CD4-positive, alpha-beta memory T cell (primary cell): ENCODE measurements at regions of chr9 and their contacts with region 1.

Region 1: GRCh38 chr9:89428901-89429890 is 68.7 kb downstream of the SEMA4D start:
- DNase-seq: peak; percentile 66 to 86 (median 73)
- H3K4me3 ChIP-seq: no peak overlapping the region
- H3K4me3 Mint-ChIP-seq: peak overlapping the region in 5 of 8 donors; percentile 17 to 73 (median 53)
- H3K27ac ChIP-seq: peak overlapping the region; percentile 4
- H3K27ac Mint-ChIP-seq: peak overlapping the region; percentile 50 to 97 (median 86)
- H3K4me1 ChIP-seq: peaks cover 100% of the 10 kb centered on the region
- H3K4me1 Mint-ChIP-seq: peaks cover 62 to 100% (median 85%) of the 10 kb centered on the region in 4 donors
- H3K27me3 ChIP-seq: no peaks in the 10 kb centered on the region
- H3K27me3 Mint-ChIP-seq: no peaks in the 10 kb centered on the region

Region 2: GRCh38 chr9:89379508-89380115 is 49.6 kb before region 1 on chr9:
- CTCF ChIA-PET with region 1: no interaction called
- POLR2A ChIA-PET with region 1: no interaction called
- intact Hi-C with region 1: no loop called
- DNase-seq: peak in 3 of 5 donors; percentile 19 to 47 (median 28)
- H3K4me3 ChIP-seq: no peak overlapping the region
- H3K4me3 Mint-ChIP-seq: no peak overlapping the region
- H3K27ac ChIP-seq: no peak overlapping the region
- H3K27ac Mint-ChIP-seq: peak overlapping the region; percentile 56 to 89 (median 79)
- H3K4me1 ChIP-seq: peaks cover 23% of the 10 kb centered on the region
- H3K4me1 Mint-ChIP-seq: peaks cover 33 to 69% (median 45%) of the 10 kb centered on the region in 4 donors
- H3K27me3 ChIP-seq: no peaks in the 10 kb centered on the region
- H3K27me3 Mint-ChIP-seq: no peaks in the 10 kb centered on the region

Region 3: GRCh38 chr9:89410641-89411350 is 18.4 kb before region 1 on chr9:
- CTCF ChIA-PET with region 1: interaction called, 8 read pairs
- POLR2A ChIA-PET with region 1: interaction called, 18 read pairs
- intact Hi-C with region 1: no loop called
- DNase-seq: peak in 4 of 5 donors; percentile 30 to 76 (median 32)
- H3K4me3 ChIP-seq: no peak overlapping the region
- H3K4me3 Mint-ChIP-seq: peak overlapping the region in 7 of 8 donors; percentile 58 to 84 (median 80)
- H3K27ac ChIP-seq: peak overlapping the region; percentile 52
- H3K27ac Mint-ChIP-seq: peak overlapping the region; percentile 86 to 95 (median 91)
- H3K4me1 ChIP-seq: peaks cover 100% of the 10 kb centered on the region
- H3K4me1 Mint-ChIP-seq: peaks cover 71 to 98% (median 82%) of the 10 kb centered on the region in 4 donors
- H3K27me3 ChIP-seq: no peaks in the 10 kb centered on the region
- H3K27me3 Mint-ChIP-seq: no peaks in the 10 kb centered on the region

Region 4: GRCh38 chr9:89442981-89443814 is 14.0 kb after region 1 on chr9:
- CTCF ChIA-PET with region 1: interaction called, 11 read pairs
- POLR2A ChIA-PET with region 1: interaction called, 9 read pairs
- intact Hi-C with region 1: no loop called
- DNase-seq: no peak
- H3K4me3 ChIP-seq: no peak overlapping the region
- H3K4me3 Mint-ChIP-seq: peak overlapping the region in 2 of 8 donors; percentile 18 to 46
- H3K27ac ChIP-seq: peak overlapping the region; percentile 50
- H3K27ac Mint-ChIP-seq: peak overlapping the region; percentile 90 to 99 (median 99)
- H3K4me1 ChIP-seq: peaks cover 99% of the 10 kb centered on the region
- H3K4me1 Mint-ChIP-seq: peaks cover 68 to 94% (median 82%) of the 10 kb centered on the region in 4 donors
- H3K27me3 ChIP-seq: no peaks in the 10 kb centered on the region
- H3K27me3 Mint-ChIP-seq: no peaks in the 10 kb centered on the region

Region 5: GRCh38 chr9:89461265-89461664 is 32.1 kb after region 1 on chr9:
- CTCF ChIA-PET with region 1: interaction called, 12 read pairs
- POLR2A ChIA-PET with region 1: interaction called, 8 read pairs
- intact Hi-C with region 1: loop called (anchors 5 kb)
- DNase-seq: peak in 1 of 5 donors; percentile 70
- H3K4me3 ChIP-seq: no peak overlapping the region
- H3K4me3 Mint-ChIP-seq: peak overlapping the region in 7 of 8 donors; percentile 36 to 80 (median 65)
- H3K27ac ChIP-seq: peak overlapping the region; percentile 45
- H3K27ac Mint-ChIP-seq: peak overlapping the region; percentile 78 to 98 (median 92)
- H3K4me1 ChIP-seq: peaks cover 100% of the 10 kb centered on the region
- H3K4me1 Mint-ChIP-seq: peaks cover 81 to 100% (median 95%) of the 10 kb centered on the region in 4 donors
- H3K27me3 ChIP-seq: no peaks in the 10 kb centered on the region
- H3K27me3 Mint-ChIP-seq: no peaks in the 10 kb centered on the region

Region 6: DNA sequence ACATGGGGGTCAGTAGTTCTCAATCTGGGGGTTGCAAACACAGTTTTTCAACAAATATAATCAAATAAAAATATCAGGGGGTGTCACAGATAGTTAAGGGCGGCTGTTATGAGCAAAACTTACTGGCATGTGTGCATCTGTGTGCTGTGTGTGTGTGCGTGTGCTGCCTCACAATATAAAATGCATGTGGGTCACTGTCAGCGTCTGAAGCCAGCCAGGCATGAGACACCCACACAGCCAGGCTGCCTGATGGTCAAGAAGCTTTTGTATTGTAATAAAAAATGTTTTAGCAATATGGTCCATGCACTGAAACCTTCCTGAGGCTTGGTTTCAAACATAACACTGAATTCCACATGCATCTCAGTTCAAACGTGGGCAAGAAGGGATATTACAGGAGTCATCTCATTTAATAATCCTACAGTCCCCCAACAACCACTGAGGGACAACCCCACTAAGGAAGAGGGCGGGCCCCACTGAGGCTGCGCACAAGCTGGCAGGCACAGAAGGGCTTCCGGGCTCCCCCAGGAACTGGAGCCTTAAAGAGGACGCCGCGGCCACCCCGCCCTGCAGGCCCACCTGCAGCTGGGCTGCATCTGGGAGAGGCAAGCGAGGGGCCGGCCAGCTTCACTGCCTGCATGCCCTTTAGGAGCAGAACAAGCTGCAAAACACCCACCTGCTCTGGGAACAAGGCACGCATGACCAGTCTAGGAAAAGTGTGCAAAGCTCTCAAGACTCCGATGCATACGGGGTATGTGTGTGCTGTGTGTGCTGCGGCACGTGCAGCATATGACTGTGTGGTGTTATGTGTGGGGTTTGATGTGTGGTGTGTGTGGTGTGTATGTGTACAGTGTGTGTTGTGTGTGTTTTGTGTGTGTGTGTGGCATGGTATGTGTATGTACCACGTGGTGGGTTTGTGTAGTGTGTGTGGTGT is 54.7 kb after region 1 on chr9:
- CTCF ChIA-PET with region 1: interaction called, 16 read pairs
- POLR2A ChIA-PET with region 1: interaction called, 13 read pairs
- intact Hi-C with region 1: no loop called
- DNase-seq: peak; percentile 66 to 83 (median 72)
- H3K4me3 ChIP-seq: peak overlapping the region; percentile 50 to 79
- H3K4me3 Mint-ChIP-seq: peak overlapping the region; percentile 92 to 100 (median 98)
- H3K27ac ChIP-seq: peak overlapping the region; percentile 58
- H3K27ac Mint-ChIP-seq: peak overlapping the region; percentile 74 to 99 (median 96)
- H3K4me1 ChIP-seq: peaks cover 89% of the 10 kb centered on the region
- H3K4me1 Mint-ChIP-seq: peaks cover 78 to 95% (median 88%) of the 10 kb centered on the region in 4 donors
- H3K27me3 ChIP-seq: no peaks in the 10 kb centered on the region
- H3K27me3 Mint-ChIP-seq: no peaks in the 10 kb centered on the region

Region 7: DNA sequence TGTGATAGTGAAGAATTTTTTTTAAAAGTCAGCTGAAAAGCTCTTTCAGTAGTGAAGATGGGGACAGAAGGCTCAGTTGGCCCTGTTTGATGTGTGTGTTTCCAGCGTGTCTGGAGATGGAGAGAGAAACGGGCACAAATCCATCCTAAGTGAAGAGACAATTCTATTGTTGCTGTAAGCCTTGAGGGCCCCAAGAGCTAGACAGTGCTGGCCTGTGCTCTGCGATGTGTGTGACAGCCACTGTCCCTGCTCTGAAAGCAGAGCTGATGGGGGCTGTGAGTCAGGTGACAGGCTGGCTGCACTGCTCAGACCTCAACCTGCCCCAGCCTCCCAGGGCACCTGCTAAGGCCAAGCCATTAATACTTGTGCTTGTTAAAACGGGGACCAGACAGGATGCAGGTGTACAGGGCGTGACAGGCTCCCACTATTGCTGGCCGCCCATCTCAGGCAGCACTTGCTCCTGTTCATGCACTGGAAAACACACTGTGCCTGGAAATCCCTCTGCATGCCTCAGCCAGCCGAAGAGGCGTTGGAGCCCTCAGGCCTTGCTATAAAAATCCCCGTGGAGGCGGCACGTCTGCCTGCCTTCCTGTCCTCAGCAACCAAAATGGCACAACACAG is 113.3 kb after region 1 on chr9:
- CTCF ChIA-PET with region 1: interaction called, 166 read pairs
- POLR2A ChIA-PET with region 1: interaction called, 9 read pairs
- intact Hi-C with region 1: no loop called
- DNase-seq: no peak
- H3K4me3 ChIP-seq: no peak overlapping the region
- H3K4me3 Mint-ChIP-seq: no peak overlapping the region
- H3K27ac ChIP-seq: no peak overlapping the region
- H3K27ac Mint-ChIP-seq: peak overlapping the region in 2 of 7 donors; percentile 8 to 13
- H3K4me1 ChIP-seq: peaks cover 37% of the 10 kb centered on the region
- H3K4me1 Mint-ChIP-seq: peaks cover 25 to 55% (median 42%) of the 10 kb centered on the region in 4 donors
- H3K27me3 ChIP-seq: no peaks in the 10 kb centered on the region
- H3K27me3 Mint-ChIP-seq: no peaks in the 10 kb centered on the region

Region 8: GRCh38 chr9:89564352-89564878 is 135.2 kb after region 1 on chr9:
- CTCF ChIA-PET with region 1: no interaction called
- POLR2A ChIA-PET with region 1: no interaction called
- intact Hi-C with region 1: no loop called
- DNase-seq: no peak
- H3K4me3 ChIP-seq: no peak overlapping the region
- H3K4me3 Mint-ChIP-seq: no peak overlapping the region
- H3K27ac ChIP-seq: no peak overlapping the region
- H3K27ac Mint-ChIP-seq: no peak overlapping the region
- H3K4me1 ChIP-seq: no peaks in the 10 kb centered on the region
- H3K4me1 Mint-ChIP-seq: no peaks in the 10 kb centered on the region
- H3K27me3 ChIP-seq: no peaks in the 10 kb centered on the region
- H3K27me3 Mint-ChIP-seq: peaks cover 2 to 7% of the 10 kb centered on the region in 2 donors